Sigmoid colon (tissue), 7 donors: ENCODE measurements at regions of chr17 and their contacts with region 1.

Region 1: DNA sequence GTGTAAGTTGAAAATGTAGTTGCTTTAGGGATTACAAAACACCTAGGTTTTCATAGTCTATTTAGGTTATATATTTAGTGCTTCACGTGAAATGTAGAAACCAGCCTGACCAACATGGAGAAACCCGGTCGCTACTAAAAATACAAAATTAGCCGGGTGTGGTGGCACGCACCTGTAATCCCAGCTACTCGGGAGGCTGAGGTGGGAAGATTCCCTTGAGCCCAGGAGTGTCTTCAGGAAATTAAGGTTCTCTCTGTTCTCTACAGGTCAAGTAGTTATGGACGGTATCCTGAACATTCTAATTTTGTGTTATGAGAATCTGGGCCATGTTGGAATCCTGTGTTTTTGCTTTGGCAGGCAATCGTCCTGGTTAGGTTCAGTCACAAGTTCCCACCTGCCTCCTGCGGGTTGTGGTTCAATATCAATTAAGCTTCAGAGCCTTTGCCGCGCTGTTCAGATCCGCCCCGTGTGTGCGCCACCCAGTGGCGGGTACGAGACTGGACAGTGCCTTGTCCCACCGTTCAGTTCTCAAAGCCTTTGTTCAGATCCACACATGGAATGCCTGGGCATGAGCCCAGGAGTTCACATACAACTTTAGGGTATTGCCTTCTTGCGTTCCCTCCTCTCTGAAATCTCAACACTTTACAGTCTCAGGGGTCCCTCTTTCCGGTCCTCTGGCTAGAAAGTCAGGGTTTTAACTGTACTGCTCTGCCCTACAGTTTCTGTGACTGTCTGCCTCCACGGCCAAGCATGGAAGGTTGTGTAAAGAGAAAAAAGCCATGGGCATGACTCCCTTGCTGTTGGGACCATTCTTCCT is 41.7 kb downstream of the HEATR6 start:
- DNase-seq: peak; percentile 77
- H3K4me3 ChIP-seq: no peak overlapping the region
- H3K27ac ChIP-seq: no peak overlapping the region
- H3K4me1 ChIP-seq: peaks cover 0 to 9% (median 7%) of the 10 kb centered on the region in 4 donors
- H3K27me3 ChIP-seq: no peaks in the 10 kb centered on the region
- CTCF ChIP-seq: peak; percentile 51 to 85 (median 69)
- EP300 ChIP-seq: no peak
- POLR2A ChIP-seq: no peak

Region 2: GRCh38 chr17:59746849-59747445 is 290.1 kb before region 1 on chr17:
- intact Hi-C with region 1: loop called (anchors 10 kb)
- DNase-seq: no peak
- H3K4me3 ChIP-seq: no peak overlapping the region
- H3K27ac ChIP-seq: no peak overlapping the region
- H3K4me1 ChIP-seq: no peaks in the 10 kb centered on the region
- H3K27me3 ChIP-seq: no peaks in the 10 kb centered on the region
- CTCF ChIP-seq: peak; percentile 31 to 63 (median 56)
- EP300 ChIP-seq: no peak
- POLR2A ChIP-seq: no peak

Region 3: GRCh38 chr17:59914274-59914854 is 122.6 kb before region 1 on chr17:
- intact Hi-C with region 1: loop called (anchors 5 kb)
- DNase-seq: no peak
- H3K4me3 ChIP-seq: no peak overlapping the region
- H3K27ac ChIP-seq: no peak overlapping the region
- H3K4me1 ChIP-seq: no peaks in the 10 kb centered on the region
- H3K27me3 ChIP-seq: no peaks in the 10 kb centered on the region
- CTCF ChIP-seq: peak in 2 of 4 experiments; percentile 43 to 63
- EP300 ChIP-seq: no peak
- POLR2A ChIP-seq: no peak

Region 4: DNA sequence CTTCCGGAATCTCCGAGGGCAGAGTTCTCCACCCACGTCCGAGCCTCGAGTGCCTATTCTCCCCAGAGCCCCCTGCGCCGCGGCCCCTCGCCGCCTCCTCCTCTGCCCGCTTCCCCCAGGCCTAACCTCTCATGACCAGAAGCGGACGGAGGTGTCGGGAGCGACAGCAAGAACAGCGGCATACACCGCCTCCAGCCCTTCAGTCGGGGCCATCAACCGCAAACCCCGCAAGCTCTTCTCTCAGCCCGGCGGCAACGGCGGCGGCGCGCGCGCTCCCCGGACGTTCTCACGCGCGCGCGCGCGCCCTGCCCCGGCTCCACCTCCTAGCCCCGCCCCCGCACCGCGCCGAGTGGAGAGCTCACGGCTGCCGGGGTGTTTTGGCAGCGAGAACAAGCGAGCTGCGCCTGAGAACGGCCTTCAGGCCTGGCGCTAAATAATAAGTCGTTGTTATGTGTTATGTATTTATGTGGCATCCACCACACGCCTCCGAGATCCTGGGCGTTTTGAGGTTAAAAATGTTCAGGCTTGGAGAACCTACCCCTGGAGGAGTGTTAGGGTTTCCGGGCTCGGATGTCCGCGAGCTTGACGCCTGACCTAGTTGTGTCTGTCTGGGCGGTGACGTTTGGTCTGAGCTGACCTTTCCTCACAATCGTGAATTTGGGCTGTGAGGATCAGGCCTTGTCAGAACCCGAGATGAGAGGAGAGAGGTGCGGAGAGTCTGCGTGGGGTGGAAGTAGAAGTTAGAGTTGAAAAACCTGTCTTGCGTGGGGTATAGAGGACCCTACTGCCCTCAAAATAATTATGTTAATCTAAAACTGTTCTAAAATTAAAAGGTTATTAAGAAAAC is 72.3 kb before region 1 on chr17 and contains the start of gene RNFT1:
- intact Hi-C with region 1: loop called (anchors 5 kb)
- DNase-seq: peak; percentile 94
- H3K4me3 ChIP-seq: peak within 1 kb of the TSS; percentile 71 to 88 (median 85)
- H3K27ac ChIP-seq: peak within 1 kb of the TSS; percentile 93 to 97 (median 94)
- H3K4me1 ChIP-seq: peaks cover 0 to 18% (median 17%) of the 10 kb centered on the region in 4 donors
- H3K27me3 ChIP-seq: no peaks in the 10 kb centered on the region
- CTCF ChIP-seq: no peak
- EP300 ChIP-seq: no peak
- POLR2A ChIP-seq: peak; percentile 17 to 65
- total RNA-seq, gene RNFT1: 11.8 to 16.8 (median 15.2) TPM

Region 5: GRCh38 chr17:60193482-60193881 is 156.5 kb after region 1 on chr17:
- intact Hi-C with region 1: no loop called
- DNase-seq: no peak
- H3K4me3 ChIP-seq: no peak overlapping the region
- H3K27ac ChIP-seq: no peak overlapping the region
- H3K4me1 ChIP-seq: no peaks in the 10 kb centered on the region
- H3K27me3 ChIP-seq: no peaks in the 10 kb centered on the region
- CTCF ChIP-seq: no peak
- EP300 ChIP-seq: no peak
- POLR2A ChIP-seq: no peak

Region 6: DNA sequence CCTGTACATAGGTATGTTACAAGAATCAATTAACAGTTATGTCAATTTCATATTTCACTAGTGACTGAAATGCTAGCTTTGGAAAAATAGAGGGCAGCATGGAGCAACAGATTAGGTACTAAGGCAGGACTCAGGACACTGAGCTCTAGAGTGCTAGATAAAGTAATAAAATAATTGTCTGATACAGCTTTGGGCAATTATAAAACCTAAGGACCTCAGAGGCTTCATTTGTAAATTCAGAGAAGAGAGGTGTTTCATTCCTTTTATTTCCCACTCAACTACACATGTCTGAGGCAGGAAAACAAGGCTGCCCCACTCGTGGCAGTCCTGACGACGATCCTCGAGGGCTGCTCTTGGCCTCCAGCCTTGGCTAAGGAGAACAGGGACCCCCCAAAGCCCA is 194.2 kb after region 1 on chr17:
- intact Hi-C with region 1: no loop called
- DNase-seq: no peak
- H3K4me3 ChIP-seq: no peak overlapping the region
- H3K27ac ChIP-seq: no peak overlapping the region
- H3K4me1 ChIP-seq: no peaks in the 10 kb centered on the region
- H3K27me3 ChIP-seq: no peaks in the 10 kb centered on the region
- CTCF ChIP-seq: peak in 1 of 4 experiments; percentile 14
- EP300 ChIP-seq: no peak
- POLR2A ChIP-seq: peak in 1 of 2 donors; percentile 10